ENCODE measurements at regions of chr6 and their contacts with region 1.

Region 1: GRCh38 chr6:74091136-74091793 is 395.3 kb downstream of the CD109 start:
- DNase-seq: no peak
- H3K4me3 ChIP-seq: no peak overlapping the region
- CTCF ChIP-seq: peak; percentile 45

Region 2: DNA sequence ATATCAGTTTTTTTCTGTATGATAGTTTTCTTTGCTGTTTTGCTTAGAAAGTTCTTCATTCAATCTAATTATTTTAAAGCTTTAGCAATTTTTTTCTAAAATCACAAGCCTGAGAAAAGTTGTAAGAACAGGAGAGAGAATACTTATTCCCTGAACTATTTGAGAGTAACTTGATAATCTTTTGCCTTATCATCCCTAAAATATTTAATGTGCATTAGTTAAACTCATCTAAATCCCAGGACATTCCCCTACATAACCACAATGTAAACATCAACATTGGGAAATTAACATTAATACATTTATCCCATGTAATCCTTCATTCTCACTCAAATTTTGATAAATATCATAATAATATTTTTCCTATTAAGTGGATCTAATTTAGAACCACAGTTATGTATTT is 153.5 kb before region 1 on chr6:
- CTCF ChIA-PET with region 1: no interaction called
- POLR2A ChIA-PET with region 1: no interaction called
- DNase-seq: no peak
- H3K4me3 ChIP-seq: no peak overlapping the region
- CTCF ChIP-seq: no peak

Region 3: DNA sequence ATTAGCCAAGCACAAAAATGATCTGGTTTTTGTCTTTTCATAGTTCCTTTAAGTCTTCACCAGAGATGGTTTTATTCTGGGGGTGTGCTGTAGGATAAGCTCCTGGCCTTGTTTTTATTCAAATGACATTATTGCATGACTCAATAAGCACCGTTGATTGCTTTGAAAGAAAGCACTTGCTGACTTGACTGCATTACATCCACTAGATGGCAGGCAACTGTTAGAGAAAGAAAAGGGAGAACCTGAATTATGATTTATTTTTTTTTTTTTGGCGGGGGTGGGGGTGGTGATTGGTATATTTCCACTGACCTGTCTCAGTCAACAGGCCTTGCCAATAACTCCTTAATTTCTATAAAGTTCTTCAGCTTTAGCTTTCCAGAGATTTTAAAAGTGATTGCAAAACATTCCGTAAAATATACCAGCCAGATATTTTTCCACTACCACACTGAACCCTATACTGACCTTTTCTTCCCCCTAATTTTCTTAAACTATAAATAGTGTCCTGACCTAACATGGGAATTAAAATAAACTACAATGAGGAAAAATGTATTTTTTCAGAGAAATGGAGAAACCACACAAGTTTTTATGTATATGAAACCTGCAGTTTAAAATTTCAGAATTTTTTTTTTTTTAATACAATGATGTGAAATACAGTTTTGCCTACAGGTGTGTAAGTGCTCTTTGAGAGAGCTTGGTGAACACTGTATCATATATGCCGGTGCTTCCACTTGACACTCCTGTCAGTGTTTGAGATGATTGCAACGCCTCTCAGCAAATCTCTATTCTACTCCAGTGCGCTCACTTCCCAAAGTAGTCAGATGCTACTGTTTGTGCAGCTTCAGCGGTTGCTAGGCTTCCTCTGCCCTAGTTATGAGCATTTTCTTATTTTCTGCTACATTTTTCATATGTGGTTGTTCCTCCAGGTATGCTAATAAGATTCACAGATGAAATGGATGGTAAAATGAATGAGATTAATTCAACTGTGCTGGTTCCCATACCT is 121.0 kb before region 1 on chr6:
- CTCF ChIA-PET with region 1: interaction called, 15 read pairs
- POLR2A ChIA-PET with region 1: no interaction called
- DNase-seq: no peak
- H3K4me3 ChIP-seq: no peak overlapping the region
- CTCF ChIP-seq: peak; percentile 47

Region 4: DNA sequence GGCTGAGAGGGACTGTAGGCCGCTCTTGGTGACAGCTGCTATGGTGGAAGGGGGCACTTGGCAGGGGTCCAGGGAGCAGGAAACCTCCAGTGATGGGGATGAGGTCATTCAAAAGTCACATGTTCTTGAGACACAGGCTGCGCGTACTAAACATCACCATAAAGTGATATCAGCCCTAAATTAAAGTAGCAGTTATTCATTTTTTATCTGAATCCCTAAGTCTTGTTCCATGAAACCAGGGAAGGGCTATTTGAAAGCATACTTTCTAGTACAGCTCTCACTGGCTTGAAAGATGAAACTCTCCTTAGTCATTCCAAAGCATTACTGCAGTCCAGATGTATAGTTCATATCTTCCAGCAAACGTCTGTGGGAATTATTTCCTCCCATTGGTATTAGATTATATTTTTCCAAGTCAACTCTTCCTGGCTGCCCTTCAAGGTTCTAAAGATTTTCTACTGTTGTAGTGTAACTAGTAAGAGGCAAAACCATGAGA is 22.1 kb before region 1 on chr6:
- CTCF ChIA-PET with region 1: interaction called, 25 read pairs
- POLR2A ChIA-PET with region 1: no interaction called
- DNase-seq: peak; percentile 55
- H3K4me3 ChIP-seq: no peak overlapping the region
- CTCF ChIP-seq: no peak

Region 5: GRCh38 chr6:74075323-74075722 is 15.9 kb before region 1 on chr6:
- CTCF ChIA-PET with region 1: interaction called, 37 read pairs
- POLR2A ChIA-PET with region 1: no interaction called
- DNase-seq: no peak
- H3K4me3 ChIP-seq: no peak overlapping the region
- CTCF ChIP-seq: no peak

Region 6: DNA sequence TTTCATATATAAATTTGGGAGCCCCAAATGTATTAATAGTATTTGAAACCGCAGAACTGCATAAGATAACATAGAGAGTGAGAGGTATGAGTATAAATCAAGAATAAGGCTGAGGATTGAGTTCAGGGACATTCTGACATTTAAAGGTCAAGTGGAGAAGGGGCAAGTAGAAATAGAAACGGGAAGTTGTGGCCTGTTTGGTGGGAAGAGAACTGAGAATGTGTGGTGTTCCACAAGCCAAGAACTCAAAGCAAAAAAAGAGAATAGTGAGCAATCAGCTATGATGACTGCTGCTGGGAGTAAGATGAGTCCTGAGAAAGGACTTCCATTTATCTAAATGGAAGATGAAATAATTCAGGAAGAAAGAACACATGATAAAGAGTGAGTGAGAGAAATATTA is 23.2 kb after region 1 on chr6:
- CTCF ChIA-PET with region 1: interaction called, 21 read pairs
- POLR2A ChIA-PET with region 1: no interaction called
- DNase-seq: no peak
- H3K4me3 ChIP-seq: no peak overlapping the region
- CTCF ChIP-seq: no peak

Region 7: DNA sequence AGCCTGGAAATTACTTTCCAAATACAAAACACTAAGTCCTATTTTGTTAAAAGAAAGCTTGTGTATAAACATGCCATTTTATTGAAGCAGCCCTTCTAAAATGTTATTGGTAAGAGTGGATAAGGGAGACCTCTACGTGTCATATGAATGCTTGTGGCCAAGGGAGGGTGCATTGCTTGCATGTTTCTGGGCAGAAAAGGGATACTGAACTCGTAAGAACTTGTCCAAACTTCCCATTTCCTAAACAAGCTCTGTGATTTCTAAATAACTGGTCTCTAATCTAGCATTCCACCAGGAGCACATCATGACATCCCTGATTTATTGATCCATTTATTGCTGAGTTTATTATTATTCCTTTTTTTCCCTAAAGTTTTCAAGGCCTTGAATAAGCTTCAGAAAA is 78.9 kb after region 1 on chr6:
- CTCF ChIA-PET with region 1: interaction called, 17 read pairs
- POLR2A ChIA-PET with region 1: no interaction called
- DNase-seq: peak; percentile 79
- H3K4me3 ChIP-seq: no peak overlapping the region
- CTCF ChIP-seq: no peak

Region 8: DNA sequence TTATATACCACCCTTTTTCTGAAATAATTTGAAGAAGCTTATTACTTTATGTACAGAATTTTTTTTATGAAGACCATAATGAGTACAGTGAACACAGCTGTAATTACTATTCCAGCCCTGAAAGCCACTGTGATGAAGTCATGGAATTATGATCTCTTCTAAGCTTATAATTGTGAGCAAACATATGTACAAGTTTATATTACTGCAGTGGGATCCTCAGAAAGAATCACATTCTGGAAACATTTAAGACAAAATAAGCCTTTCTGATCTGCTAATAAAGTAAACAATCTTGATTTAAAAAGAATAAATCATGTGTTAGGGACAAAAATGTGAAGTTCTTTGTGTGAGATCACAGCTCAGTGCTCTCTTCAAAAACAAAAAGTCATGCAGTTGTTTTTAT is 165.1 kb after region 1 on chr6:
- CTCF ChIA-PET with region 1: no interaction called
- POLR2A ChIA-PET with region 1: no interaction called
- DNase-seq: no peak
- H3K4me3 ChIP-seq: no peak overlapping the region
- CTCF ChIP-seq: no peak

Region 9: DNA sequence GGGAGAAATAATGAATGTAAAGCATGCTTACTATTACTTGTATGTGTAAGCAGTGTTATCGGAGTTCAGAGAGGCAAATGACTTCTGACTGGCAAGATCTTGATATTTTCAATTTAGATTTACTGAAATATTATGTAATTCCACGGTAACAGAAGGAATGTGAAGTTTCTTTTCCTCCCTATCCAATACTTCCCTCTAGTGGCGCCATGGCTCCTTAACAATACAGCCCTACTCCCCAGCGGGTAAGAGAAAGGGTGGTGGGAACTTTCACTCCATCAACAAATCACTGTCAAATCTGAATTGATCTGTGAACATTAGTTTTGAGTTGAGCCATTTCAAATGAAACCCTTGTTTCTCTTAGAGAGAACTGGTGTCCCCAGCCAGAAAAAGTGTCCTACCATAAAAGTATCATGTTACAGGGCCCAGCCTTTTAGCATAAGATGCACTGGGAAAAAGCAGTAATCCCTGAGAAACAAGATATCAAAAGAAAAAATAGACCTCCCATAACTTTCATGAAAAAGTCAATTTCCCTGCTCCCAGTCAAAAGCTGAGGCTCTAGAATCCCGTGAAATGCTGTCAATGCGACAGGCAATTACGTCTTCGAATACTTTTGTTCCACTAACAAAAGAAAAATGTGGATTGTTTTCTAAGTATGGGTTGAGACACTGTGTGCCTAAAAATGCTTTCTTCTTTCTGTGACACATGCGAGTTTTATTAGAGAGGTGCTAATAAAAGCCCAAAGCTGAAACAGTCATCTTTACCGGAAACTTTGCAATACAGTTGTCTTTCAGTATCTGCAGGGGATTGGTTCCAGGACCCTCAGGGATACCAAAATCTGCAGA is 1139.4 kb after region 1 on chr6:
- CTCF ChIA-PET with region 1: interaction called, 10 read pairs
- POLR2A ChIA-PET with region 1: no interaction called
- DNase-seq: no peak
- H3K4me3 ChIP-seq: no peak overlapping the region
- CTCF ChIP-seq: peak; percentile 73

Measured in AG04449 (cell line).